ENCODE measurements at regions of chr9 and their contacts with region 1.

Region 1: GRCh38 chr9:95004411-95005277 is 278.1 kb downstream of the AOPEP start:
- DNase-seq: peak; percentile 34
- H3K4me3 ChIP-seq: peak overlapping the region; percentile 79 to 95 (median 87)
- H3K27ac ChIP-seq: peak overlapping the region; percentile 88
- H3K4me1 ChIP-seq: peaks cover 40% of the 10 kb centered on the region
- H3K27me3 ChIP-seq: no peaks in the 10 kb centered on the region
- CTCF ChIP-seq: no peak

Region 2: GRCh38 chr9:94630281-94631232 is 374.1 kb before region 1 on chr9:
- CTCF ChIA-PET with region 1: no interaction called
- dilution Hi-C with region 1: no loop called
- in situ Hi-C with region 1: no loop called
- intact Hi-C with region 1: no loop called
- DNase-seq: peak; percentile 18
- H3K4me3 ChIP-seq: no peak overlapping the region
- H3K27ac ChIP-seq: no peak overlapping the region
- H3K4me1 ChIP-seq: no peaks in the 10 kb centered on the region
- H3K27me3 ChIP-seq: no peaks in the 10 kb centered on the region
- CTCF ChIP-seq: no peak

Region 3: DNA sequence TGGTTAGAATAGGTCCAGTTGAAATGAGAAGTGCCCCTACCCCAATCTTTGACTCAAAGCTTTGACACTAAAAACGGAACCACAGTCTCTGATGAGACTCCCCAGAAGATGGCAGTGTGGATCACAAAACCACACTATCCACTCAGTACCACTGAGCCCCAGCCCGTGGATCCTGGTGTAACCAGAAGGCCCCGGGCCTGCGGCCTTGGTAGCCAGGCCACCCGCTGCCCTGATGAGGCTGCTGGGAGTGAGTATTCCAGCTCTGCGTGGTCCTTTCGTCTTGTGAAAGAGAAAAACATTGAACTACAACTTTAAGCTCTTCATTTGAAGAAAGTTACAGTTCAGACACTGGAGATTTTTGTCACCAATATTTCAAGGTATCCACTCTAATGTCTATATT is 323.1 kb before region 1 on chr9:
- CTCF ChIA-PET with region 1: no interaction called
- dilution Hi-C with region 1: no loop called
- in situ Hi-C with region 1: no loop called
- intact Hi-C with region 1: loop called (anchors 5 kb)
- DNase-seq: peak; percentile 52
- H3K4me3 ChIP-seq: no peak overlapping the region
- H3K27ac ChIP-seq: no peak overlapping the region
- H3K4me1 ChIP-seq: no peaks in the 10 kb centered on the region
- H3K27me3 ChIP-seq: no peaks in the 10 kb centered on the region
- CTCF ChIP-seq: peak; percentile 54 to 71

Region 4: GRCh38 chr9:94867281-94867841 is 137.3 kb before region 1 on chr9:
- CTCF ChIA-PET with region 1: no interaction called
- dilution Hi-C with region 1: no loop called
- in situ Hi-C with region 1: no loop called
- intact Hi-C with region 1: loop called (anchors 5 kb)
- DNase-seq: peak; percentile 77
- H3K4me3 ChIP-seq: peak overlapping the region in 1 of 3 experiments; percentile 0
- H3K27ac ChIP-seq: peak overlapping the region; percentile 88
- H3K4me1 ChIP-seq: peaks cover 45% of the 10 kb centered on the region
- H3K27me3 ChIP-seq: no peaks in the 10 kb centered on the region
- CTCF ChIP-seq: no peak

Region 5: DNA sequence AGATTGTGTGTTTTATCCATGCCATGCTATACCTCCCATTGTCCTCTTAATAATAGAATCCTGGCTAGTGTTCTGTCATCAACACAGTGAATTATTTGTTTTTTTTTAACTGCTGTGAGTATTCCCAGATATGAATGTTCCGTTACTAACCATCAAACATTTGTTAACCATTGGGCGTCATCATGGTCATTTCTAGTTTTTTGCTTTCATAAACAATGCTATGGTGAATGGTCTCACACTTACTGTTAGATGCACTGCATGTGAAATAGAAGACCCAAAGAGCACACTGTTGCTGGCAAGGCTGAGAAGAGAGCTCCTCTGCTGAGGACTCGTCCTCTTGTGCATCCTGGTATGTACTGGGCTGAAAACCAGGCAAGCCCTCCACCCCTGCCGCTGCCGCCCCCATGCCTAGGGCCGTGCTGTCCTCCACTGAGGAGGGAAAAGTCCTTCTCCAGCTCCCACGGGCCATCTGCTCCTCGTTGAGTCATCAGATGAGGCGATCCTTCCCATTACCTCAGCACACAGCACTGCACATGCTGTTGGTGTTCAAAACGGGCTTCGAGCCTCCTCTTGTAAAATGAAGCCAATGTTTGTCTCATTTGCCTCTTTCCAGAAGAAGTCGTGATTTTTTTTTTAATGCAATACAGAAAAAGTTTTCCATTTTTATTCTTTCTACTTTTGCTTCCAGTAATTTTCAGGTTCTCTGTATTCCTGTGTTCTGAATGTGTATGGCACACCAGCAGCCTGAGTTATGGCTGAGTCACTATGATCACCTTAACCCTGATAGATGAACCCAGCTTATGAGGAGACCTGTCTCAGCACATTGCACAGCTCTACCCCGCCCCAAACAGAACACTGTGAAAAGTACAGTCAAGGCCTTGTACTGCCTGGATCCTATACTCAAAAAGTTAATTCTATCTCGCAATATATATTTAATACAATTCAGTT is 59.2 kb before region 1 on chr9:
- CTCF ChIA-PET with region 1: no interaction called
- dilution Hi-C with region 1: no loop called
- in situ Hi-C with region 1: no loop called
- intact Hi-C with region 1: loop called (anchors 2 kb)
- DNase-seq: peak; percentile 82
- H3K4me3 ChIP-seq: no peak overlapping the region
- H3K27ac ChIP-seq: peak overlapping the region; percentile 55
- H3K4me1 ChIP-seq: peaks cover 36% of the 10 kb centered on the region
- H3K27me3 ChIP-seq: no peaks in the 10 kb centered on the region
- CTCF ChIP-seq: no peak

Region 6: DNA sequence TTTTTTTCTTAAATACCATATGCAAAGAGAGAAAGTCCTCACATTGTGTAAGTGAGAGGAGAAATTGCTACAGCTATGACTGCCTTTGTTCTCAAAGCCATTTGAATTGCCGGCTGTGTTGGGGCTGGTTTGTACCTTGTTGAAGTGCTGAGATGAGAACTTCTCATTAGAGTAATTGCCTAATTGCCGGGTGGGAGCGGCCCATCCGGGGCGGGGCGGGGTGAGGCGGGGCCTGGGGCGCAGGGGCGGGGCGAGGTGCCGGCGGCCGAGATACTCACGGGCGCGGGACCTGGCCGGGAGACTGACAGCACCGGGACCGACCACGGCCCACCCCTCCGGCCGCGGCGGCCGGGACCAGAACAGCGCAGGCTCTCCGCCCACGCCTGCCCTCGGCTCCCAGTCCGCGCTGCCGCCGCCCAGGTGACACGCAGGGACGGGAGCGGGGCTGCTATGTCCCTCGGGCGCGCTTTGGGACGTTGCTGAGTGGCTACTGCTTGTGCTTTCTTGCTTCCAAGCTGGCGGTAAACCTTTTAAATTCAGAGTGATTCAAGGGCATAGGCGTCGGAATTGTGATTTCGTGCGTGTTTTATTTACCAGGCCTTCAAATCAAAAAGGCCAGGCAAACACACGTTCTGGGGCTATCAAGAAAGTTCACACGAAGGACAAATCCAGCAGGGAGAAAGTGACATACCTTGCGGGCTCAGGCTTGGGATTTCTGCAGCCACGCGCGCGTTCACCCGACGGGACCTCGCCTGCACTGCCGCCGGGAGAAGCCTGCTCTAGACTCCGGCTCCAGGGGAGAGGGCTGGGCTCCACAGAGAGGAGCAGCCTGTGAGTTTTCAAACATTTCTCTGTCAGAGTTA is 43.8 kb after region 1 on chr9:
- CTCF ChIA-PET with region 1: no interaction called
- dilution Hi-C with region 1: no loop called
- in situ Hi-C with region 1: no loop called
- intact Hi-C with region 1: loop called (anchors 1 kb)
- DNase-seq: peak; percentile 83
- H3K4me3 ChIP-seq: peak overlapping the region; percentile 61 to 66 (median 65)
- H3K27ac ChIP-seq: peak overlapping the region; percentile 78
- H3K4me1 ChIP-seq: peaks cover 15% of the 10 kb centered on the region
- H3K27me3 ChIP-seq: no peaks in the 10 kb centered on the region
- CTCF ChIP-seq: no peak

Region 7: GRCh38 chr9:95127249-95128176 is 122.9 kb after region 1 on chr9:
- CTCF ChIA-PET with region 1: no interaction called
- dilution Hi-C with region 1: no loop called
- in situ Hi-C with region 1: no loop called
- intact Hi-C with region 1: loop called (anchors 1 kb)
- DNase-seq: peak; percentile 65
- H3K4me3 ChIP-seq: peak overlapping the region; percentile 6 to 44 (median 29)
- H3K27ac ChIP-seq: no peak overlapping the region
- H3K4me1 ChIP-seq: peaks cover 5% of the 10 kb centered on the region
- H3K27me3 ChIP-seq: no peaks in the 10 kb centered on the region
- CTCF ChIP-seq: peak; percentile 94 to 100